ENCODE measurements at regions of chr3 and their contacts with region 1.

Region 1: DNA sequence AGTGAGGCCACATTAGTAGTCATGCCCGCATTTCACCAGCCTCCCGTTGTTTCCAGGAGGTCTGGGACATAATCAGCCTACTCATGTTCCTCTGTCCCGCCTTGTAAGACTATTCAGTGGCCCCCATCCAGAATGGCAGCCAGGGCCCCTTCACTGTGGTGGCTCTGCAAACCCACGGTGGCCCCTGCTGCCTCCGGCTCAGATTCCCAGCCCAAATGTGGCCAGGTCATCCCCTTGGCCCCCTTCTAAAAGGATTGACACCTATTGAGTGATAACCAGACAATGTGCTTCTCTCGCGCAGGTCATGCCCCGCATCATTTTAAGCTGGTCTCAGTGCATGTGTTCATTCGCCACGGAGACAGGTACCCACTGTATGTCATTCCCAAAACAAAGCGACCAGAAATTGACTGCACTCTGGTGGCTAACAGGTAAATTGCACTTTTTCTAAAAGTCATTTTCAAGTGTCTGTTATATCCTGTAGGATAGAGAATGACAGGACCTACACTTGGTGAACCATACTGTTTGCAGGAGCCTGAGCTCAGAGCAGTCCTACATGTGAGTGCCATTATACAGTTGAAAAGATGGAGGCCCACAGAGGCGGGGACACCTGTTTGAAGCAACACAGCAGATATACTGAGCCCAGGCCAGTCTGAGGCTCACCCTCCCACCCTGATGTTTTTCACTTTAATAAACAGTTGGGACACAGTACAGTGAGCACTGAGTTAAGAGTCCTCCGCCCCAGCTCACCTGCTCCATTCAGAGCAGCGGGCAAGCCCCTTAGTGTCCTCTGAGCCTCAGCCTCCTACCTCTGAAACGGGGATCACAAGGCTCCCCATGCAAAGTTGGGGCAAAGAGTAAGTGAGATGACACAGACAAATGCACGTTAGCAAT is 47.7 kb downstream of the PXYLP1 start:
- DNase-seq: no peak
- H3K4me3 ChIP-seq: no peak overlapping the region
- H3K27ac ChIP-seq: peak overlapping the region in 3 of 4 donors; percentile 19 to 66 (median 52)
- H3K4me1 ChIP-seq: peaks cover 0 to 6% (median 0%) of the 10 kb centered on the region in 4 donors
- H3K27me3 ChIP-seq: no peaks in the 10 kb centered on the region
- CTCF ChIP-seq: peak; percentile 57 to 61 (median 58)
- EP300 ChIP-seq: no peak
- POLR2A ChIP-seq: no peak

Region 2: DNA sequence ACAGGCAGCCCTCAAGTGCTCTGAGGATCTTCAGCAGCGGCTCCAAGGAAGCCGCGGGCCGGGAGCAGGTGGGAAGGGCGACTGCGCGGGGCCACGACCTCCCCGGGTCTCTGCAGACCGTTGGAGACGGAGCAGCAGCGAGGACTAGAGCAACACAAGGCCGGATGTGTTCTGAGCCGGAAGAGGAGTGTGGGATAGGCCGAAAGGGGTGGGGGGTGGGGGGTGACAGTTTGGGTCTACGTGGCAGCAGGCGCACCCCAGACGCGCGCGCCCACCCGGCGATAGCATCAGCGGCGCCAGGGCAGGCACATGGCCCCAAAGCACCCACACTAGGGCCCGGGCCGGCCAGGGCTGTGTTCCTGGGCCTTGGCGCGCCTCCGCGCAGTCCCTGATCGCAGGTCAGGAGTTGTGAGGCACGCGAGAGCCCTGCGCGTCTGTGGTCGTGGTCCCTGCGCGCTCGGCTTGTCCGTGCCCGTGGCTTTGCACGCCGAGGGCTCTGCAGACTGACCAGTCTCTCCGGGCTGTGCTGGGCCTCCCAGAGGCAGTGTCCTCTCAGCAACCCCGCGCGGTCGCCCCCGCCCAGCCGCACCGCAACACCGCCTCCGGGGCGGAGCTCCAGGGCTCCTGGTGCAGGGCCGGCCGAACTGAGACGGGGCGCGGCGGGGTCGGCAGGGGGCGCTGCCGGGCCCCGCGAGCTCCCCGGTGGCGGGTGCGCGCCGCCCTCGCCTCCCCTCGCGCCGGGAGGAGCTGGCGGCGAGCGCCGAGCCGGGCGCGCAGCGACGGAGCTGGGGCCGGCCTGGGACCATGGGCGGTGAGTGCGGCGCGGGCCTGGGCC is 48.0 kb before region 1 on chr3 and contains the start of gene PXYLP1:
- in situ Hi-C with region 1: no loop called
- intact Hi-C with region 1: loop called (anchors 5 kb)
- DNase-seq: peak; percentile 95
- H3K4me3 ChIP-seq: peak within 1 kb of the TSS; percentile 72 to 94 (median 82)
- H3K27ac ChIP-seq: peak within 1 kb of the TSS; percentile 85 to 92 (median 86)
- H3K4me1 ChIP-seq: peaks cover 9 to 21% (median 14%) of the 10 kb centered on the region in 4 donors
- H3K27me3 ChIP-seq: no peaks in the 10 kb centered on the region
- CTCF ChIP-seq: peak; percentile 10 to 68 (median 51)
- EP300 ChIP-seq: no peak
- POLR2A ChIP-seq: peak; percentile 82
- total RNA-seq, gene PXYLP1: 11.5 to 27.7 (median 12.2) TPM

Measured in transverse colon (tissue), 4 donors.